ENCODE measurements at regions of chr10 and their contacts with region 1.

Region 1: DNA sequence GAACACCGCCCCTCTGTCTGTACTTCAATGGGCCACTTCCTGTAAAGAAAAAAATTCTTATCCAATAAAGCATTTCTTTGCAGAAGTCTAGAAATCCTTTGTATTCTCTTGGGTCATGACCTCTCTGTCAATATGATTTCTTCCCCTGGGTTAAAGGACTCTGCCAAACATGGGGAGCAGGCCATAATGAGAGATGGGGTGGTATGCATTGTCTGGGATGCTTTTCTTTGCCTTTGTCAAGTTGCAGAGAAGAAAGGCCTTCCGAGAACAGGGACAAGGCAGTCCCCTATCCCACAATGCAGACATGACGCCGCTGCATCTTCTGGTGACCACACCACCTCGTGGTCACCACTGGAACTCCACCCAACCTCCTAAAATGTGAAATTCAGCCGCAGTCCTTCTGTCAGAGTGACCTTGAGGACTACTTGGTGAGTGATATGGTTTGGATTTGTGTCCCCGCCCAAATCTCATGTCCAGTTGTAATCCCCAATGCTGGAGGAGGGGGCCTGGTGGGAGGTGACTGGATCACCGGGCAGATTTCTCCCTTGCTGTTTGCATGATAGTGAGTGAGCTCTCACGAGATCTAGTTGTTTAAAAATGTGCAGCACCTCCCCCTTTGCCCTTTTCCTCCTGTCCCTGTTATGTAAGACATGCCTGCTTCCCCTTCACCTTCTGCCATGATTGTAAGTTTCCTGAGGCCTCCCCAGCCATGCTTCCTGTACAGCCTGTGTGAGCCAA is 15.2 kb upstream of the FRMPD2 start:
- DNase-seq: peak in 9 of 10 donors; percentile 59 to 79 (median 65)
- H3K4me3 ChIP-seq: no peak overlapping the region
- H3K27ac ChIP-seq: no peak overlapping the region
- H3K27me3 ChIP-seq: no peaks in the 10 kb centered on the region
- CTCF ChIP-seq: peak; percentile 51 to 96 (median 89)

Region 2: GRCh38 chr10:48215488-48216204 is 74.0 kb before region 1 on chr10:
- intact Hi-C with region 1: loop called in 1 of 2 experiments (anchors 5 kb)
- DNase-seq: peak in 1 of 10 donors; percentile 37
- H3K4me3 ChIP-seq: no peak overlapping the region
- H3K27ac ChIP-seq: no peak overlapping the region
- H3K27me3 ChIP-seq: no peaks in the 10 kb centered on the region
- CTCF ChIP-seq: peak in 54 of 56 donors; percentile 21 to 68 (median 54)

Region 3: DNA sequence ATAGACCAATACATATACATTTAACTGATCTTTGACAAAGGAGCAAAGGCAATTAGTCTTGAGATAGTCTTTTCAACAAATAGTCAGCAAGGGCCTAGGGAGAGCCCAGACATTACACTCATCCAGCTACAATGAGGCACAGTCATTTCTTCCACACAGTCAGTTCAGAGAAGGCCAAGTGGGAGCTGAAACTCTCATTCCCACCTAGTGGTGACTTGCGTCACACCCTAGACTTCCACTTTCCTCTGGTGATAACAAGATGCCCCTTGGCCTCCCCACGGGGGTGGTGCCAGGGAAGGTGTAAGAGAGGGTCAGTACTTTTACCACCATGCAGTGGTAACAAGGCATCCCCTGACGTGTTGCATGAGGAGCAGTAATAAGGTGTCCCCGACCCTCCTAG is 23.1 kb before region 1 on chr10:
- intact Hi-C with region 1: no loop called
- DNase-seq: no peak
- H3K4me3 ChIP-seq: no peak overlapping the region
- H3K27ac ChIP-seq: no peak overlapping the region
- H3K27me3 ChIP-seq: no peaks in the 10 kb centered on the region
- CTCF ChIP-seq: peak in 1 of 56 donors; percentile 8

Measured in dorsolateral prefrontal cortex (tissue), 120 donors.